ENCODE measurements at regions of chr15 and their contacts with region 1.

Region 1: DNA sequence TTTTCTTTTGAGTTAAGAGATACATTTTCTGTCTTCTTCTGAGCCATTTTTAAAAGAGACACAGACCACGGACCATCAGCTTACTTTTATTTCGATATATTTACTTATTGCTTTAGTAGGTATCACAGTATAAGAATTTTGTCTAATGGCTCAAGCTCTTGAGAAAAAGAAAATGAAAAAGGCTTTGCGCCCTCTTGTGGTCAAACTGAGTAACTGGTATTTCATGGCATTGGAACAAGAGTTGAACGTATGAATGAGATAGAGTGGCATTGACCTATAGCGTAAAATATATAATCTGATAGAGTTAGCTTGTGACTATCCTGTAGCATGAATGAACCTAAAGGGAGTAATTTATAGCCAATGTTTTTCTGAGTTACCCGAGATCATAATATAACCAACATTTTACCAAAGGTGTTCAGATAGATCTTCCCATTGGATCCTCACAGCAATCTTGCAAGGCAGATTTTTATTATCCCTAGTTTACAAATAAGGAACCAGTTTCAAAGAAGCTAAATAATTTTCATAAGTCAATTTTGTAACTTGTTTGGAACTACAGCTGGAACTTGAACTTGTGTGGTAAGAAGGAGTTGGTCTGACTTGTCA is 154.6 kb downstream of the POLR2M start:
- DNase-seq: peak; percentile 38
- H3K4me3 ChIP-seq: no peak overlapping the region
- H3K27ac ChIP-seq: no peak overlapping the region
- H3K4me1 ChIP-seq: no peaks in the 10 kb centered on the region
- H3K27me3 ChIP-seq: no peaks in the 10 kb centered on the region
- CTCF ChIP-seq: peak; percentile 78 to 94 (median 81)
- POLR2A ChIP-seq: no peak

Region 2: DNA sequence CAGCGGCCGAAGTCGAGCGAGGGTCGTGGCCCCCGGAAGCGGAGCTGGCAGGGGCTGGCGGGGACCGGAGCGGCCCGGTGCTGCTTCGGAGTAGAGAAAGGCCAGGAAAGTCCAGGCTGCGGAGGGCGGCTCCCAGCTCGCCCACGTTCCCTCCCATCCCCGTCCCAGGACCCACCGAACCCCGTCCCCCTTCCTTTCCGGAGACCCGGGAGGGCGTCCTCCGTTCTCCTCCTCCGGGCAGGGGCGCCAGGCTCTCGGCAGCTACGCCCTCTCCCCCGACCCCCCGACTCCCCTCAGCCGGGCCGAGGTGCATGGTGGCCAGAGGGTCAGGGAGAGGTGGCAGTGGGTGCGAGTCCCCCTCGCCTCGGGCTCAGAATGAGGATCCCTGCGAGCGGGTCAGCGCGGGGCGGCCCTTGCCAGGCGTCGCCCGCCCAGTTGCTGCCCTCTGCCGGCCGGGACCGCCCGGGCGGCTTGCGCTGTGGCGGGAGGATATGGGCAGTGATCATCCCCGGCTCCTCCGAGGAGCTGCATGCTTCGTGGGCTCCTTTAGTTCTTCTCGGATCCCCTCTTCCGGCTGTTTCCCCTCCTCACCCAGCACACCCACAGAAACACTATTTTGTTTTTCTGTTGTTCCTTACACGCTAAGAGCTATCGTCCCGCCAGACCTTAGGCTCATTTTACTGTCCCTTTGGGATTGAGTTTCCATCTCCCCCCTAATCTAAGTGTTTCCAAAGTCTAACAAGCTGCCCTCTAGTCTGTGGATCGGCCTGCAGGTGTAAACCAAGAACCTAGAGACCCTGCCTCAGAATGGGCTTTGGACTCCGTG is 205.1 kb after region 1 on chr15:
- intact Hi-C with region 1: loop called (anchors 5 kb)
- DNase-seq: peak; percentile 73
- H3K4me3 ChIP-seq: peak overlapping the region; percentile 59 to 70
- H3K27ac ChIP-seq: peak overlapping the region; percentile 69 to 73
- H3K4me1 ChIP-seq: no peaks in the 10 kb centered on the region
- H3K27me3 ChIP-seq: no peaks in the 10 kb centered on the region
- CTCF ChIP-seq: peak; percentile 64 to 76 (median 76)
- POLR2A ChIP-seq: no peak

Measured in testis (tissue), 5 donors.